Heart right ventricle (tissue), 16 donors: ENCODE measurements at regions of chr22 and their contacts with region 1.

Region 1: GRCh38 chr22:30386960-30387827 is at the start of gene RNF215:
- DNase-seq: peak; percentile 78 to 90
- ATAC-seq: peak; percentile 86 to 96 (median 92)
- H3K4me3 ChIP-seq: peak within 1 kb of the TSS; percentile 35 to 74 (median 62)
- H3K27ac ChIP-seq: peak within 1 kb of the TSS; percentile 52 to 84 (median 74)
- H3K4me1 ChIP-seq: peaks cover 4 to 26% (median 16%) of the 10 kb centered on the region in 9 donors
- H3K27me3 ChIP-seq: peaks cover 0 to under 1% (median 0%) of the 10 kb centered on the region in 7 donors
- CTCF ChIP-seq: peak; percentile 88 to 99 (median 95)
- total RNA-seq, gene RNF215: 3.4 to 10.5 (median 6.0) TPM

Region 2: DNA sequence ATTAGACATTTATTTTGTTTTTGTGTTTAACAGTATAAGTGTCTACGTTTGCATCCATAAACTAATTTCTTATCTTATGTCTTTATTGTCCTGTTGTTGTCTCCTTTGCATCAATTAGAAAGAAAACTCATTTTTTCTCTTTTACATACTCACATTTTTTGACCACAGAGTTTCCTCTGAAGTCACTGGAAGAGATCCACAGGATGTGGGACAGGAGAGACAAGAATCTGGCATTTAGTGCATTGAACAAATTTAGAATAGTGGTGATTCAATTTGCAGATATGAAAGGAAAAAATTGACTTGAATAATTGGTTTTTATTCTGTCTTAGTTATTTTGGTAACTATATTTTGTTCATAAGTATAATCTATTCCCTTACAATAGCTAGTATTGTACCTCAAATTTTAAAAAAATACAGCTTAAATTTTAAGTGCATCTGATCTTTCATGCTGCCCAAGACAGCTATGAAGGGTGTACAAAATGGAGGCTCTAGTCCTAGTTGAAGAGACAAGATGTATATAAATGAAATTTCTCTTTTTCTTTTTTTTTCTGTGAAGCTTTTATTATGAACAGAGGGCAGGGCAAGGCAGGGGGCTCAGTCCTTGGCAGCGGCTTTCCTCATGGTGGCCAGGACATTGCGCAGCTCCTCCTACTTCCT is 282.6 kb before region 1 on chr22:
- intact Hi-C with region 1: loop called in 8 of 10 experiments (anchors 2 to 10 kb)
- DNase-seq: no peak
- ATAC-seq: no peak
- H3K4me3 ChIP-seq: no peak overlapping the region
- H3K27ac ChIP-seq: no peak overlapping the region
- H3K4me1 ChIP-seq: peaks cover 0 to 5% (median 0%) of the 10 kb centered on the region in 9 donors
- H3K27me3 ChIP-seq: peaks cover 0 to 31% (median 18%) of the 10 kb centered on the region in 7 donors
- CTCF ChIP-seq: no peak

Region 3: DNA sequence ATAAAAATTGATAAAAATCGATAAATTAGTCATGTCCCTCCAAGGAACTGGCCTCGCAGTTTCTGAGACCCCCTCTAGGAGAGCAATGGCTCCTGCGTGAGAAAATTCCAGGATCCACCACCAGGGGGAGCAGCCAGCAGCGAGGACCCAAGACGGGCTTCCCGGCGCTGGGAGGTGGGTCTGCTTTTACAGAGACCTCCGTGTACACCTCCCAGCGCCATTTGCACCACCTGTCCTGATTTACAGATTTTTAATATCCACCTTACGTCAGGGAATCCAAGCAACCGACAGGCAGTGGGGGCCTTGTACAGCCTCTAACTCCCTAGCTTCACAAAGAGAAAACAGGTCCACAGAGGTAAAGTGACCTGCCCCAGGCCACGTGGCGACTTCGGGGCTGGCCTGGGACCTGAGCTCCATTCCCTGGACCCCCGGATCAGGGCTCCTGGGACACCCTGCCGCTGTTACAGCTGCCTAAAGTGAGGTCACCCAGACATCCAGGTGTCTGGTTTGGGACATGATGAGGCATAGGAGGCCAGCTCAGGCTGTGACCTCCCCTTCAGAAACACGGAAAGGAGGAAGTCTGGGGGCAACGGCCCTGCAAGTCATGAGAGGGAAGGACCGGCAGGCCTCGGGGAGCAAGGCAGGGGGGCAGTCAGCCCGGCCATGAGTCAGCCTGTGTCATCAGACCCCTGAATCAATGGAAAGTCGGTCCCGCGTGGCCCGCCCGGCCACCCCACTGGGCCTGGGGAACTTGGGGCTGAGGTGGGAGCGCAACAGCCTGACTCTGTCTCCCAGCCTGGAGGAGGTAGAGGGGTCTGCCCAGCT is 124.1 kb before region 1 on chr22:
- intact Hi-C with region 1: loop called in 9 of 10 experiments (anchors 1 to 5 kb)
- DNase-seq: peak; percentile 71 to 76
- ATAC-seq: peak in 6 of 8 donors; percentile 8 to 59 (median 52)
- H3K4me3 ChIP-seq: peak overlapping the region in 5 of 10 donors; percentile 19 to 32 (median 25)
- H3K27ac ChIP-seq: peak overlapping the region in 1 of 10 donors; percentile 71
- H3K4me1 ChIP-seq: peaks cover 0 to 56% (median 4%) of the 10 kb centered on the region in 9 donors
- H3K27me3 ChIP-seq: peaks cover 0 to 25% (median 11%) of the 10 kb centered on the region in 7 donors
- CTCF ChIP-seq: peak; percentile 91 to 99 (median 97)

Region 4: GRCh38 chr22:30277547-30278344 is 109.4 kb before region 1 on chr22:
- intact Hi-C with region 1: no loop called
- DNase-seq: peak in 1 of 2 donors; percentile 36
- ATAC-seq: peak; percentile 21 to 72 (median 53)
- H3K4me3 ChIP-seq: peak overlapping the region in 2 of 10 donors; percentile 5 to 16
- H3K27ac ChIP-seq: peak overlapping the region in 9 of 10 donors; percentile 23 to 82 (median 44)
- H3K4me1 ChIP-seq: peaks cover 0 to 89% (median 12%) of the 10 kb centered on the region in 9 donors
- H3K27me3 ChIP-seq: no peaks in the 10 kb centered on the region
- CTCF ChIP-seq: no peak

Region 5: DNA sequence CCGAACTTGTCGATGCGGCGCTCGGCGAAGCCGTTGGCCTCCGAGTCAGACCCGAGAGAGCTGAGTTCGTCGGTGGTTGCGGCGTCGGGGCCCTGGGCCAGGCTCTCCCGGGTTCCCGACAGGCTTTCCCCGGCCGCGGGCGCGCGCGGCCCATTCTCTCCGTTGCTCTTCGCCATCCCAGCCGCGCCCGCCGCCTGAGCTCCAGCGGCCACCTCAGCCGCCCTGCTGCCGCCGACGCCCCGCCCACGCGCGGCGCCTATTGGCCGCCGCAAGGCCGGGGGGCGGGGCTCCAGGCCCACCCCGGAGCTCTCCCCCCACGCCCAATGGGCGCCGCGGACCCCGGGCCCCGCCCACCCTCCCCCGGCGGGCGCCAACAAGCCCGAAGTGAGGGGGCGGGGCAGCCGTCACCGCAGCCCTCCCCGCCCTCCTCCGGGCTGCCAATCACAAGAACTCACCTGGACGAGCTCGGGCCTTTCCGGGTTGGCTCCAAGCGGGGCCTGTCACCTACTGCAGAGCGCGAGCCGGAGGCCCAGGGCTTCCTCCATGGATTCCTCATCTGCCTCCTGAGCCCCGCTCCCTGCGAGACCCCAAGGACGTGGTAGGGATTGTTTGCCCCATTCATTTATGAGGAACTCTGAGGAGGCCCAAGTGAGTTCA is 60.4 kb before region 1 on chr22 and contains the start of gene TBC1D10A:
- intact Hi-C with region 1: loop called in 1 of 10 experiments (anchors 10 kb)
- DNase-seq: peak; percentile 84 to 91
- ATAC-seq: peak; percentile 90 to 97 (median 94)
- H3K4me3 ChIP-seq: peak within 1 kb of the TSS; percentile 64 to 100 (median 96)
- H3K27ac ChIP-seq: peak within 1 kb of the TSS; percentile 78 to 94 (median 89)
- H3K4me1 ChIP-seq: peaks cover 11 to 51% (median 43%) of the 10 kb centered on the region in 9 donors
- H3K27me3 ChIP-seq: no peaks in the 10 kb centered on the region
- CTCF ChIP-seq: no peak
- total RNA-seq, gene TBC1D10A: 3.2 to 7.5 (median 5.6) TPM

Region 6: DNA sequence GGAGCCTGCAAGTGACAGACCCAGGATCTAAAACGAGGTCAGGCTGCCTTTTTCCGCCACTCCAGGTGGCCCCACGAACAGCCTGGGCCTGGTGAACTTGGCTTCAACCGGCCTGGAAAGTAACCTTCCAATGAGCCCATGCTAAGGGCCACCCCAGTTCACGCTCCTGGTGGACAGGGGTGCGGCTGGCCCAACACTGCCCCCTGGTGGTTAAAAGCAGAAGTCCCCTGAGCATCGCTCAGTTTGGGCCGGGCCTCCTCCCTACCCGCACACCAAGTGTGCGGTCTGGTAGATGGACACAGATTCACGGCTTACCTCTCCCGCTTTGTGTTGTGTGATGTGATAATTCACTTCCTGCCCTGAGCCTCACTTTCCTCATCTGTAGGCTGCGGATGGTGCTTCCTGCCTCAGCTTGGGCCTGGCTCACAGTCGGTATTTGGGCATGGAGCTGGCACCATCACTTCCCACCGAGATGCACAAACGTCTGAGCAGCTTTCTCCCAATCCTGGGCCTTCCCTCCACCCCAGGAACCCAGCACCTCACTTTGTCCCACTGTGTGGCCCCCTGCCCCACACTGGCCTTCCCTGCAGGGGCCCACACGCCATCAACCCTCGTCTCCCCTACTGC is 98.3 kb after region 1 on chr22:
- intact Hi-C with region 1: loop called (anchors 1 to 10 kb)
- DNase-seq: peak; percentile 44 to 53
- ATAC-seq: peak; percentile 86 to 92 (median 88)
- H3K4me3 ChIP-seq: no peak overlapping the region
- H3K27ac ChIP-seq: no peak overlapping the region
- H3K4me1 ChIP-seq: peaks cover 0 to 3% (median 0%) of the 10 kb centered on the region in 9 donors
- H3K27me3 ChIP-seq: peaks cover 0 to 13% (median 4%) of the 10 kb centered on the region in 7 donors
- CTCF ChIP-seq: peak; percentile 85 to 99 (median 96)